PC-9 (cell line): ENCODE measurements at regions of chr16 and their contacts with region 1.

Region 1: DNA sequence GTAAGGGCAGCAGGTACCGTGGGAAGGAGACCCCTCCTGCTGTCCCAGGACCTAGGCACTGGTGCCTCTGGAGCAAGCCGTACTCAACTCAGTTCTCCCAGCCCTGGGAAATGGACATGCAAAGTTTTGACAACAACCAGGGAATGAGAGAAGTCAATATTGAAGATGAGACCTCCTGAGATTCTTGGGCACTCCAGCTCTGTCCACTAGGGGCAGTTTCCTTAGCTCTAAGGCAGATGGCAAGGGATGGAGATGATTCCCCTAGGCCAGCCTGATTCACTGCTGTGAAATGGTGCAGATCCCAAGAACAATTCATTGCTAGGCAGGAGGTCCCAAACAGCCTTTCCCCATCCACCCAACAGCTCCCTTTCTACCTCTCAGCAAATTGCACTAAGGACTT is 20.6 kb upstream of the SDR42E2 start:
- DNase-seq: no peak
- H3K4me3 ChIP-seq: no peak overlapping the region
- H3K27ac ChIP-seq: no peak overlapping the region
- H3K4me1 ChIP-seq: no peaks in the 10 kb centered on the region
- H3K27me3 ChIP-seq: peaks cover 18% of the 10 kb centered on the region; the same call in 1 of the 2 replicates
- CTCF ChIP-seq: peak; percentile 63

Region 2: GRCh38 chr16:22023505-22023904 is 118.2 kb before region 1 on chr16:
- CTCF ChIA-PET with region 1: interaction called, 11 read pairs
- POLR2A ChIA-PET with region 1: no interaction called
- intact Hi-C with region 1: no loop called
- DNase-seq: no peak
- H3K4me3 ChIP-seq: no peak overlapping the region
- H3K27ac ChIP-seq: 0 out of 2 replicates have a peak overlapping the region, but pooled peaks have one; percentile 20
- H3K4me1 ChIP-seq: peaks cover 52% of the 10 kb centered on the region
- H3K27me3 ChIP-seq: no peaks in the 10 kb centered on the region
- CTCF ChIP-seq: no peak

Region 3: DNA sequence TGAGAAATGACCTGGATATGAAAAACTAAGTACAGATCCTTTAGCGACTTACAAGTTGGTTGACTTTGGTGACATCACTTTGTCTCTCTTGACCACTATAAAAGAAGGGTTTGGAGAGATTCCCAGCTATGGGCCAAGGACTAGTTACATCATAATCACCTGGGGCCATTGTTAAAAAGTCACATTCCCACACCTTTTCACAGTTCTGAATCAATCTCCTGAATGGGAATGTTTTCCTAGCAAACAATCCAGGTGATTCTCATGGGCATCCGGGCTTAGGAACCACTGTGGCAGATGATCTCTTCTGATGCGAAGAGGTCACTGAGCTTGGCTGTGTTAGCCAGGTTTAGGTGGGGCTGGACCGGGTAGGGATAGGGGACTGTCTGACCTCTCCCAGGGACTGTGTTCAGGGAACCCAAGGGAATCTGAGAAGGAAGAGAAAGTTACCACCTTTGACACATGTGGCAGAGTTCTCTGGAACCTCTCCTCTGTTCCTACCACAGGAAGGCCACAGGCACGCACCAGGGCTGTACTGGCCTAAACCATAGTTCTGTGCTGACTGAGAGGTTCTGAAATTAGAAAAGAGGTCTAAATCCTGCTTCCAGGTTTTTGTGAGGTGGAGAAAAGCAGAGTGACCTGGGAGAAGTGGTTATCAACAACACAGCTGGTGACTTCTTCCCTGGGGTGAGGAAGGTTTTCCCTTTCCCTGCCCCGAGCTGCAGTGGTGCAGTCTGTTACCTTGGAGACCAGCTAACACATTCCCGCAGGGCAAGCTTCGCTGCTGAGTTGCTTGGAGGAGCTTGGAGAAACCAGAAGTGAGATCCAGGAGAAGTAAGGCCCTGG is 49.8 kb before region 1 on chr16 and contains the start of gene VWA3A:
- CTCF ChIA-PET with region 1: no interaction called
- POLR2A ChIA-PET with region 1: no interaction called
- intact Hi-C with region 1: no loop called
- DNase-seq: peak; percentile 39 to 76
- H3K4me3 ChIP-seq: no peak within 1 kb of the TSS
- H3K27ac ChIP-seq: no peak within 1 kb of the TSS
- H3K4me1 ChIP-seq: no peaks in the 10 kb centered on the region; the same call in 1 of the 2 replicates
- H3K27me3 ChIP-seq: no peaks in the 10 kb centered on the region
- CTCF ChIP-seq: no peak
- total RNA-seq, gene VWA3A: 0.73 and 0.83 TPM in 2 replicates